Activated CD4-positive, alpha-beta T cell treated with anti-CD3 and anti-CD28 coated beads for 36 hours (primary cell): ENCODE measurements at regions of chr10 and their contacts with region 1.

Region 1: DNA sequence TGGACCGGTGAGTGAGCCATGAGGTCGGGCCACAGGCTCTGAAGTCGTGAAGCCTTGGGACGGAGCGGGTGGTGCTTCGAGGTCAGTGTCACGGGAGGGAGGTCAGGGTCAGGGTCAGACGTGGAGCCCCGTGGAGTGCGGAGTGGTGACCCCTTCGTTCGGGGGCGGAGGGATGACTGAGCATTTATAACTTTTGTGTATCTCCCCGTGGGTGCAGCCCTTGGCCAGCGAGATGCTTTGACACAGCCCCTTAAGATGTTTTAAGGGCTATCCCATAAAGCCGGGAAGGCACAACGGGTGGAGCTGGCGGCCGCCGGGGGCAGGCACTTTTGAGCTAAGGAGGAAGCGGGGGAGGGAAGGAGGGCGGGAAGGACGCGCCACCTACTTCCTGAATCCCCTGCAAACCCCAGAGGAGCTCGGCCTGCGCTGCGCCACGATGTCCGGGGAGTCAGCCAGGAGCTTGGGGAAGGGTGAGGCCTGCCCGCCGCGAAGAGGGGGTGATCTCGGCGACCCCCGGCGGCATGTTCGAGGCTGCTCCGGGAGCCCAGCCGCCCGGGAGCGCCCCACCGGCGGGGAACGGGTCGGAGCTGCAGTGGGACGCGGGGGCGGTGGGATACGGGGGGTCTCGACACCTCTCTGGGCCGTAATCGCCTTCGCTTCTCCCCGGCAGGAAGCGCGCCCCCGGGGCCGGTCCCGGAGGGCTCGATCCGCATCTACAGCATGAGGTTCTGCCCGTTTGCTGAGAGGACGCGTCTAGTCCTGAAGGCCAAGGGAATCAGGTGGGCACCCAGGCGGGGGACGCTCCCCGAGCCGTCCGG is at the start of gene GSTO1:
- DNase-seq: peak; percentile 71
- ATAC-seq: peak; percentile 56
- H3K4me3 Mint-ChIP-seq: peak within 1 kb of the TSS; percentile 85
- H3K27ac Mint-ChIP-seq: peak within 1 kb of the TSS; percentile 97
- H3K4me1 Mint-ChIP-seq: peaks cover 53% of the 10 kb centered on the region
- H3K27me3 Mint-ChIP-seq: peaks cover 2% of the 10 kb centered on the region
- total RNA-seq, gene GSTO1: 261 to 320 TPM

Region 2: GRCh38 chr10:103204353-103205255 is 1050.1 kb before region 1 on chr10:
- CTCF ChIA-PET with region 1: no interaction called
- POLR2A ChIA-PET with region 1: no interaction called
- intact Hi-C with region 1: no loop called
- DNase-seq: no peak
- ATAC-seq: no peak
- H3K4me3 Mint-ChIP-seq: no peak overlapping the region
- H3K27ac Mint-ChIP-seq: no peak overlapping the region
- H3K4me1 Mint-ChIP-seq: no peaks in the 10 kb centered on the region
- H3K27me3 Mint-ChIP-seq: no peaks in the 10 kb centered on the region

Region 3: DNA sequence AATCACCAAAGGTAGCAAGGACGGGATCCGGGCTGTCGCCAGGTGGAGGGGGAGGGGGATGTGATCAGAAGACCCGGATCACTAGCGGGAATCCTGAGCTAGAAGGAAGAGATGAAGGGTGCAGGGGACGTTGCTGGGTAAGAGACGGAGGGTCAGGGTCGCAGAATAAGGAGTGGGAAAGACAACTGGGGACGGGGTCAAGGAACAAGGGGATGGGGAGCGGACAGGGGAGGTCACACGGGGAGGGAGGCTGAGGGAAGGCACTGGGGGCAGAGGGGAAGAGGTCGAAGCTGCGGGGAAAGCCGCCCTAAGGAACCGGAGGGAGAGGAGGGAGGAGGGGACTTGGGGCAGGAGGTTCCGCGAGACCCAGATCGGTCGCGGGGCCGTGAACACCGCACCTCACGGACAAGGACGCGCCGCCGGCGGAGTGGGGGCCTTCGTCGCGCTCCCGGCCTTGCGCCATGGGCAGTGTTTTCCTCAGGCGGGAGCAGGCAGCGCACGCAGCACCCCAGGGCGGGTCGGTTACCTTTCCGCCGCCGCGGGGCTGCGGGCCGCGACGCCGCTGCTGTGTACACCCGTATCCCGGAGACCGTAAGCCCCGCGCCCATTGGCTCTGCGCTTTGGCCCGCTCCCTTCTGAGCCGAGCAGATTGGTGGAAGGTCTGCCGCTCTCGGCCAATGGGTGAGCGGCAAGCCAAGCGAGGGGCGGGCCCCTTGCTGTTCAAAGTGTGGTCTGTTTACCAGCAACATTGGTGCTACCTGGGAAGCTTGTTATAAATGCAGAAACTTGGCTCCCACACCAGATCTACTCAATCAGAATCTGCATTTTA is 22.7 kb before region 1 on chr10 and contains the start of gene CFAP43:
- CTCF ChIA-PET with region 1: interaction called, 3 read pairs
- POLR2A ChIA-PET with region 1: interaction called, 6 read pairs
- intact Hi-C with region 1: loop called (anchors 1 to 2 kb)
- DNase-seq: peak; percentile 100
- ATAC-seq: peak; percentile 100
- H3K4me3 Mint-ChIP-seq: peak within 1 kb of the TSS; percentile 78
- H3K27ac Mint-ChIP-seq: peak within 1 kb of the TSS; percentile 21
- H3K4me1 Mint-ChIP-seq: peaks cover 5% of the 10 kb centered on the region
- H3K27me3 Mint-ChIP-seq: peaks cover 13% of the 10 kb centered on the region
- total RNA-seq, gene CFAP43: 0.09 TPM